Activated naive CD4-positive, alpha-beta T cell treated with anti-CD3 and anti-CD28 coated beads, Interleukin-2, amount 10 ng/mL, durations not matched to agents 7 days and 5 days (primary cell): ENCODE measurements at regions of chr20 and their contacts with region 1.

Region 1: DNA sequence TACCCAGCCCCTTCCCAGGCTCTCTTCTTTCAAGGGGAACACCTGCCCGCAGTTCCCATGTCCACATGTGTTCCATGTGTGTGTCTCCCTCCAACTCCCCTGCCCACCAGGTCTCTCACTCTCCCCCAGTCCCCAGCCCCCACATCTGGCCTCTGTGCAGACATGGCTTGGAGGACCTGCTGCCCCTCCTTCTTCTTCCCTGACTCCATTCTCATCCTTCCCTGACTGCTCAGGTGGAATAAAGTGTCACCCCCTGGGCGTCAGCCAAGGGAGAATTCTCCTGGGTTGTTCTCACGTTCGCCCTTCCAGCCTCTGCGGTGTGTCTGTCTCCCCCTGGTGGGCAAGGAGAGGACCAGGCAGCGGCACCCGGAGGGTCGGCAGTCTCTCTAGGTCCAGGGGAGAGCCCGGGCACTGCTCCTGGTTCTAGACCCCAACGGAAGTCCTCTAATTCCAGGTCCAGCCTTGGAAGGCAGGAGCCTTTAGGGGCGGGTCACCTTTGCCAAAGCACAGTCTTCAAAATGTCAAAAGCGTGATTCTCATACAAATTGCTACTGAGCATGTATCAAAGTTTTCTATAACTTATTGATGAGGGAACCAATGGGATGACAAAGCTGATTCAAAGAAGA is 50.5 kb downstream of the EBF4 start:
- DNase-seq: peak; percentile 78
- H3K4me3 Mint-ChIP-seq: no peak overlapping the region
- H3K27ac Mint-ChIP-seq: peak overlapping the region; percentile 78
- H3K4me1 Mint-ChIP-seq: peaks cover 32% of the 10 kb centered on the region
- H3K27me3 Mint-ChIP-seq: peaks cover 38% of the 10 kb centered on the region

Region 2: DNA sequence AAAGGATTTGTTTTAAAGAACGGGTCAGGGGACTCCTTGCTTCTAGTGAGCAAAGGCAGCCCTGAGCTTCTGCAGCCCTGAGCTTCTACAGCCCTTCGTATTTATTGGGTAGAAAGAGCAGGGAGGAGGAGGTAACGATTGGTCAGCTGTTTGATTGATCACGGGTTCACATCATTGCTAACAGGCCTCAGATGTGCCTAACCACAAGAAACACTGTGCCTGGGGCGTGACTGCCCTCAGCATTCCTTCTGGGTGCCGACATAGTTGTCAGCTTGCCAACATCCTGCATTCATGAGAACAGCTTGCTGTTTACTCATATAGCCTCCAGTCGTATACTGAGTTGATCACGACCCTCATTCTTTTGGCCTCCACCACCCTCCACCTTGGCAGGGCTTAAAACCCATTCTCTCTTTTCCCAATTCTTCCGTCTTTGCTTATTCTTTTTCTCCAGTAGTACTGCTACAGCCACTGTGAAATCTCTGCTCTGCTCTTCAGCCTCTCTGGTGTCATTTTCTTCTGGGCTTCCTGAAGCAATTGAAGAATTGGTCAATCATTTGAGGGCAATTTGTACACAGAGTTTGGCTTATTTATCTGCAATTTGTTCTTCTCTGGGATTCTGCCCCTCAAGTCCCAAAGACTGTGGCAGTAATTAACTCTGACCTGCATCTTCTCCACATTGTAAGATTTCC is 116.0 kb before region 1 on chr20:
- CTCF ChIA-PET with region 1: no interaction called
- DNase-seq: no peak
- H3K4me3 Mint-ChIP-seq: no peak overlapping the region
- H3K27ac Mint-ChIP-seq: no peak overlapping the region
- H3K4me1 Mint-ChIP-seq: no peaks in the 10 kb centered on the region
- H3K27me3 Mint-ChIP-seq: peaks cover 50% of the 10 kb centered on the region

Region 3: DNA sequence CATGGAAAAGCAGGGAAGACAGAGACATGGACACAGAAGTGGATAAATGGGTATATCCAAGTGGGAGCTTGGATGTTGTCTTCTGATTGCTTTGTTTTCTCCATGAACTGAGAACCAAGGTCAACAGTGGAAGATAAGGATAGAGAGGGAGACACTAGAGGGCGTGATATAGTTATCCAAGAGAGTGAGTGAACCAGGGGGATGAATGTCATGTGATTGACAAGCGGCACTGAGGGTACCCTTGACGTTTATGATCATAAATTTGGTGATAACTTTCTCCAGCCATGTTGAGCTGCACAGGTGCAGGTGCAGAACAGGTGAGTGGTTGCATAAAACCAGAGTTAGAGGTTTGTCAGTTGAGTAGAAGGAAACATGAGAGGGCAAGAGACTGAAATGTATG is 29.8 kb before region 1 on chr20:
- CTCF ChIA-PET with region 1: interaction called, 31 read pairs
- DNase-seq: no peak
- H3K4me3 Mint-ChIP-seq: no peak overlapping the region
- H3K27ac Mint-ChIP-seq: no peak overlapping the region
- H3K4me1 Mint-ChIP-seq: no peaks in the 10 kb centered on the region
- H3K27me3 Mint-ChIP-seq: peaks cover 11% of the 10 kb centered on the region

Region 4: GRCh38 chr20:2729251-2729713 is 13.8 kb before region 1 on chr20:
- CTCF ChIA-PET with region 1: interaction called, 46 read pairs
- DNase-seq: peak; percentile 56
- H3K4me3 Mint-ChIP-seq: peak overlapping the region; percentile 1
- H3K27ac Mint-ChIP-seq: peak overlapping the region; percentile 85
- H3K4me1 Mint-ChIP-seq: peaks cover 19% of the 10 kb centered on the region
- H3K27me3 Mint-ChIP-seq: peaks cover 18% of the 10 kb centered on the region